ENCODE measurements at regions of chr22 and their contacts with region 1.

Region 1: GRCh38 chr22:42437488-42438292 is 5.5 kb upstream of the NFAM1 start:
- DNase-seq: peak; percentile 58 to 81 (median 76)
- H3K4me3 ChIP-seq: peak overlapping the region; percentile 22
- H3K27ac ChIP-seq: no peak overlapping the region
- H3K4me1 ChIP-seq: peaks cover 6% of the 10 kb centered on the region
- H3K27me3 ChIP-seq: no peaks in the 10 kb centered on the region
- CTCF ChIP-seq: peak; percentile 91 to 98 (median 97)
- EP300 ChIP-seq: no peak
- POLR2A ChIP-seq: peak; percentile 19

Region 2: GRCh38 chr22:41957941-41958556 is 479.6 kb before region 1 on chr22:
- intact Hi-C with region 1: loop called in 1 of 4 experiments (anchors 5 kb)
- DNase-seq: no peak
- H3K4me3 ChIP-seq: no peak overlapping the region
- H3K27ac ChIP-seq: no peak overlapping the region
- H3K4me1 ChIP-seq: peaks cover 5% of the 10 kb centered on the region
- H3K27me3 ChIP-seq: no peaks in the 10 kb centered on the region
- CTCF ChIP-seq: no peak
- EP300 ChIP-seq: no peak
- POLR2A ChIP-seq: no peak

Region 3: GRCh38 chr22:42090596-42091454 is 346.9 kb before region 1 on chr22 and contains the start of gene NDUFA6:
- intact Hi-C with region 1: loop called in 1 of 4 experiments (anchors 5 kb)
- DNase-seq: peak; percentile 97 to 99 (median 98)
- H3K4me3 ChIP-seq: peak within 1 kb of the TSS; percentile 89
- H3K27ac ChIP-seq: peak within 1 kb of the TSS; percentile 74 to 86
- H3K4me1 ChIP-seq: peaks cover 8% of the 10 kb centered on the region
- H3K27me3 ChIP-seq: no peaks in the 10 kb centered on the region
- CTCF ChIP-seq: peak; percentile 79 to 99 (median 99)
- EP300 ChIP-seq: no peak
- POLR2A ChIP-seq: peak; percentile 78
- total RNA-seq, gene NDUFA6: 28.3 to 49.2 (median 43.4) TPM

Region 4: GRCh38 chr22:42169055-42169469 is 268.6 kb before region 1 on chr22:
- intact Hi-C with region 1: loop called (anchors 2 kb)
- DNase-seq: peak; percentile 49 to 84 (median 78)
- H3K4me3 ChIP-seq: no peak overlapping the region
- H3K27ac ChIP-seq: no peak overlapping the region
- H3K4me1 ChIP-seq: no peaks in the 10 kb centered on the region
- H3K27me3 ChIP-seq: no peaks in the 10 kb centered on the region
- CTCF ChIP-seq: peak; percentile 78 to 91 (median 88)
- EP300 ChIP-seq: no peak
- POLR2A ChIP-seq: peak; percentile 15